ENCODE measurements at regions of chr12 and their contacts with region 1.

Region 1: DNA sequence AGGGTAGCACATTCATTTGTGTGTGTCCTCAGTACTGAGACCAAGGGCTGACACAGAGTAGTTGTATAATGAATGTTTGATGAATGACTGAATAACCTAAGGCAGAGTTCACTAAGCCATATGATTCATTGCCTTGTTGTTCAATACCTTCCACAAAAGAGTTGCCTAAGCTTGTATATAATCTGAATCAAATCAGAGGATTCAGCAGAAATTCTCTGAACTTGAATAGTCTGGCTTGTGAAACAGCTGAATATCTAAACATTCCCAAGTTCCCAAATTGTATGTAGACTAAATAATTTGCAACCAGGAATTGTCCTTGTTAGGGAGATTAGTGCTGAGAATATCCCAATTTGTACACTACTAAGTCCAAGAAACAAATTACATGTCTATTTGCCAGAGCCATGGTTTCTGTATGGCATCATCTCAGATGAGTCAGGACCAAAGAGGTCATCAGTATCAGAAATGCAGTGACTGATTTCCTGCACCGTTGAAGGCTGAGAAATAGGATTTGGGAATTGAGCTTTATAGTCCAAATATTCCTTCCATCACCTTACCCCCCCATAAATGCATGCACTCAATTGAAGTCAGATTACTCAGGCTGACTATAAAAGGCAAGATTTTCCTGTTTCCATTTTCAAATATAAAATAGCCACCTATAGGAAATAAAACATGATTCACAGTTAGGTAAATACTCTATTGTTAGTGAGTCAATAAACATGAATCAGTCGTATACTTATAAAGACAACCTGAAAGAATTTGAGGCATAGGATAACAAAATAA is 168.7 kb downstream of the PHLDA1 start:
- DNase-seq: peak; percentile 97
- ATAC-seq: peak; percentile 77
- H3K4me3 ChIP-seq: peak overlapping the region; percentile 36; the same call in 1 of the 2 replicates
- H3K27ac ChIP-seq: peak overlapping the region; percentile 98
- H3K4me1 ChIP-seq: peaks cover 57% of the 10 kb centered on the region
- H3K27me3 ChIP-seq: no peaks in the 10 kb centered on the region
- CTCF ChIP-seq: no peak

Region 2: GRCh38 chr12:75842090-75842489 is 20.8 kb before region 1 on chr12:
- CTCF ChIA-PET with region 1: no interaction called
- POLR2A ChIA-PET with region 1: no interaction called
- intact Hi-C with region 1: no loop called
- DNase-seq: no peak
- ATAC-seq: no peak
- H3K4me3 ChIP-seq: no peak overlapping the region
- H3K27ac ChIP-seq: no peak overlapping the region
- H3K4me1 ChIP-seq: no peaks in the 10 kb centered on the region
- H3K27me3 ChIP-seq: no peaks in the 10 kb centered on the region
- CTCF ChIP-seq: no peak

Region 3: DNA sequence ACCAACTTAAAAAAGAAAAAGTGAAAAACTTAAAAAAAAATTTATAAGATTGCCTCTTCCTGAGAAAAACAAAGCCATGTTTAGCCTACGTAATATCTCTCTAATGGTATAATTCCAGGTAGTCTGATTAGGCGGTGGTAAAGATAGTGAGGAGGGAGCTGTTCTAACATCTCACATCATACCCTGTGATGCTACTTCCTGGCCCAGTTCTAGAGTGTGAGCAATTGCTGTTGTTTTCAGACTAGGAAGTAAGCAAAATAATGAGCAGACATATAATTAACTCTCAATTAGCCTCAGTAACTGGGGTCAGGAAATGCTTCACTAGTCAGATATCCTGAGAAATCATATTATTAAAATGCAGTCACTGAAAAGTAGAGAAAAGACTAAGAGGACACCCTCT is 54.8 kb after region 1 on chr12:
- CTCF ChIA-PET with region 1: no interaction called
- POLR2A ChIA-PET with region 1: no interaction called
- intact Hi-C with region 1: no loop called
- DNase-seq: no peak
- ATAC-seq: no peak
- H3K4me3 ChIP-seq: no peak overlapping the region
- H3K27ac ChIP-seq: no peak overlapping the region
- H3K4me1 ChIP-seq: no peaks in the 10 kb centered on the region
- H3K27me3 ChIP-seq: no peaks in the 10 kb centered on the region
- CTCF ChIP-seq: no peak

Region 4: GRCh38 chr12:75944097-75944904 is 81.4 kb after region 1 on chr12:
- CTCF ChIA-PET with region 1: no interaction called
- POLR2A ChIA-PET with region 1: no interaction called
- intact Hi-C with region 1: loop called (anchors 1 kb)
- DNase-seq: peak; percentile 96
- ATAC-seq: peak; percentile 86
- H3K4me3 ChIP-seq: peak overlapping the region; percentile 23; the same call in 1 of the 2 replicates
- H3K27ac ChIP-seq: peak overlapping the region; percentile 98
- H3K4me1 ChIP-seq: peaks cover 23% of the 10 kb centered on the region
- H3K27me3 ChIP-seq: no peaks in the 10 kb centered on the region
- CTCF ChIP-seq: no peak

Measured in PC-3 (cell line).